Ascending aorta (tissue), 2 donors: ENCODE measurements at regions of chr1 and their contacts with region 1.

Region 1: GRCh38 chr1:151934048-151934493 is 24.8 kb upstream of the THEM4 start:
- DNase-seq: no peak
- H3K4me3 ChIP-seq: no peak overlapping the region
- H3K27ac ChIP-seq: no peak overlapping the region
- H3K4me1 ChIP-seq: no peaks in the 10 kb centered on the region
- H3K27me3 ChIP-seq: no peaks in the 10 kb centered on the region
- CTCF ChIP-seq: peak; percentile 71 to 87 (median 78)

Region 2: DNA sequence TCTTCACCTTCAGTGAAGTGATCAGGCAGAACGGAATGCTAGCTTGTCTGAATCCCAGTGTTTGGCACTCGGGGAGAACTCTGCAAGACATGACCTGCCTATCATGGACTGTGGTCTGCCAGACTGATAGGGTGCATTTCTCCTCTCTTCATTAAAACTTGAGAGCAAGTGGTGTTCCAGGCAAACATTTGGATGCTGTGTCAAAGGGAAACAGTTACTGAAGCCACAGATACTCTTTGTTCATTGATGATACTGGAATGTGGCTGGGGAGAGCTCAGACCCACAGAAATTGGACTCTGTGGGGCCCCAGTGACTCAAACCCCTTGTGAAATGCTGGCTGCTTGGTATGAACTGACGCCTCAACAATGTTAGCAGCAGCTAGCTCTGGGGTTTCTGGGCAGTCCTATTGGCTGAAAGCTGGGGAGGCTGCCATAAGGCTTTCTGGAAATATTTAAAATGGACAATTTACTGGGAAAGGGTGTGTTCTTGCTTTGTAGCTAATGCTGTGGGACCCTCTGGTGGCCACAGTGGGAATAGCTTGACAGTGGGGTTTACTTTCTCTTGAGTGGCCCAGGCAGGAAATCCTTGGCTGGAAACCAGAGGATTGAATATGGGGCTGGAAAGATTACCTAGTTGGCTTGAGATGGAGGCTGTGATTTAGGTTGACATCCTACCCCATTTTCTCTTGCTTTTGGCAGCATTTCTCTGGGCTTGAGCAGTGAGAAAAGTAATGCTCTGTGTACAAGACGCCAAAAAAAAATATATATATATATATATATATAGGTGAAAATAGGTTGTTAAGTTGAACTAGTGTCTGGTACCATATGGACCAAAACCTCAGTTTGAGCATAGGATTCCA is 67.5 kb after region 1 on chr1:
- intact Hi-C with region 1: loop called (anchors 1 kb)
- DNase-seq: peak; percentile 66 to 94
- H3K4me3 ChIP-seq: no peak overlapping the region
- H3K27ac ChIP-seq: no peak overlapping the region
- H3K4me1 ChIP-seq: peaks cover 0 to 2% of the 10 kb centered on the region in 2 donors
- H3K27me3 ChIP-seq: no peaks in the 10 kb centered on the region
- CTCF ChIP-seq: peak; percentile 71 to 93 (median 86)